ENCODE measurements at regions of chr9 and their contacts with region 1.

Region 1: GRCh38 chr9:5608298-5609225 is 20.3 kb upstream of the RIC1 start:
- ATAC-seq: peak in 3 of 8 experiments; percentile 72 to 85 (median 80)
- H3K4me3 ChIP-seq: no peak overlapping the region
- H3K27ac ChIP-seq: no peak overlapping the region
- H3K4me1 ChIP-seq: no peaks in the 10 kb centered on the region

Region 2: GRCh38 chr9:5073701-5074100 is 534.9 kb before region 1 on chr9:
- in situ Hi-C with region 1: loop called in 1 of 9 experiments (anchors 25 kb)
- ATAC-seq: peak in 2 of 8 experiments; percentile 32 to 34
- H3K4me3 ChIP-seq: no peak overlapping the region
- H3K27ac ChIP-seq: no peak overlapping the region
- H3K4me1 ChIP-seq: no peaks in the 10 kb centered on the region

Region 3: GRCh38 chr9:5278486-5278885 is 330.1 kb before region 1 on chr9:
- in situ Hi-C with region 1: no loop called
- ATAC-seq: no peak
- H3K4me3 ChIP-seq: no peak overlapping the region
- H3K27ac ChIP-seq: no peak overlapping the region
- H3K4me1 ChIP-seq: no peaks in the 10 kb centered on the region

Region 4: DNA sequence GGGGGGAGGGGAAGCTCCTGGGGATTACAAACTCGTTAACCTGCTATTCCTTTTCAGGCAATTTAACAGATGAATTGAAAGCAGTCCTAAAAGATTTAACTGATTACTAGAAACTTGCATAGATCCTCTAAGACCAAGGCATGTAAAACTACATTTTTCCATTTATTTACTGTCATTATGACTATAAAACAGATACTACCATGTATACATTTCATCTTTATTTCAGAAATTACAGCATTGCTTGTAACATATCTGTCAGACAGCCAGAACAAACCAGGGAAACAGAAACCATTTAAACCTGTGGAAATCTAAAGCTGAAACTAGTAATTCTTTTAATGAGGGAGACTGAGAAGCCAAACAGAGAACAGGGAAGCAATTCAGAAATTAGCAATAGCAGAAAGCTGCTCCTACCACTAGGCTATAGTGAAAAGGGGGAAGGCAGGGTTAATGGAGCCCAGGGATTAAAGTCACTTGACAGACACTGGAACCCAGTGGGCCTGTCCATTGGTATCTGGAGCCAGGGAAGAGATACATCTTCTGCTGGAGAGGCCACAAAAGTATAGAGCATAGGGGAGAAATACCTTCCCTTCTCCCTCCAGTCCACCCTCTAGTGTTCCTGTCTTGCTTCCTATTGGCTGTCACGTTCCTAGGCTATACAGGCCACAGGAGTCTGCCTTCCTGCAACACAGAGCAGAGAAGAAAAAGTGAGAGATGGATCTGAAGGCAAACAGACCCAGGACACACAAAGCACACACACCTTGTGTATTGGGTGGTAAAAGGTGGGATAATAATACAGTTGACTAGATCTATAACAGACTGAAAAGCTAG is 64.5 kb before region 1 on chr9:
- in situ Hi-C with region 1: no loop called
- ATAC-seq: no peak
- H3K4me3 ChIP-seq: no peak overlapping the region
- H3K27ac ChIP-seq: no peak overlapping the region
- H3K4me1 ChIP-seq: no peaks in the 10 kb centered on the region